ENCODE measurements at regions of chr17 and their contacts with region 1.

Region 1: DNA sequence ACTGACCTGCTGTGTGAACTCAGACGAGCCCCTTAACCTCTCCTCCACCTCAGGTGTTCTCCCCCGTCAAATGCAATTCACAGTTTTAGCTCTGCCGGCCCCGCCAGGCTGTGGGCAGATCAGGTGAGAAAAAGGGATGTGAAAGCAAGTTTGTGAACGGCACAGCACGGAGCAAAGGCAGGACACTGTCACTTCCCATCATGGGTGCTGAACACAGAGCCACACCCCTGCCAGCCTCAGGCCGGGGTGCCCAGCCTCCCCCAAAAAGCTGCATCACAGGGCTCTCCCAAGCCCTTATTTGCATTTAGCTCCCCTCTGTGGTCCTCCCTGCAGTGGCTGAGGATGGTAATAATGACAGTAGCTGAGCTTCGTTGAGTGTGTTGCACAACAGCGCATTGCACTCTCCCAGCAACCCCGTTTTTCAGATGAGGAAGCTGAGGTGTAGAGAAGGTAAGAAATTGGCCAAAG is 88.8 kb upstream of the TNRC6C start:
- DNase-seq: peak; percentile 87
- ATAC-seq: peak; percentile 97
- H3K4me3 ChIP-seq: no peak overlapping the region
- H3K27ac ChIP-seq: no peak overlapping the region
- H3K4me1 ChIP-seq: peaks cover 22% of the 10 kb centered on the region
- H3K27me3 ChIP-seq: peaks cover 0 to 4% of the 10 kb centered on the region in 2 experiments; a peak in 1 of 4 replicates
- CTCF ChIP-seq: peak in 1 of 3 experiments; percentile 13; a peak in 1 of 6 replicates
- EP300 ChIP-seq: peak; percentile 86 to 91; a peak in 3 of 4 replicates
- POLR2A ChIP-seq: no peak
- RAD21 ChIP-seq: no peak

Region 2: GRCh38 chr17:77834170-77835115 is 35.3 kb before region 1 on chr17:
- CTCF ChIA-PET with region 1: interaction called, 7 read pairs
- POLR2A ChIA-PET with region 1: interaction called, 4 read pairs
- RAD21 ChIA-PET with region 1: interaction called, 22 read pairs
- SMC1A ChIA-PET with region 1: interaction called, 18 read pairs
- in situ Hi-C with region 1: no loop called
- intact Hi-C with region 1: no loop called
- DNase-seq: peak; percentile 49
- ATAC-seq: peak; percentile 97
- H3K4me3 ChIP-seq: no peak overlapping the region
- H3K27ac ChIP-seq: no peak overlapping the region
- H3K4me1 ChIP-seq: peaks cover 6% of the 10 kb centered on the region
- H3K27me3 ChIP-seq: no peaks in the 10 kb centered on the region; a peak in 1 of 4 replicates
- CTCF ChIP-seq: no peak
- EP300 ChIP-seq: no peak
- POLR2A ChIP-seq: no peak
- RAD21 ChIP-seq: no peak

Region 3: DNA sequence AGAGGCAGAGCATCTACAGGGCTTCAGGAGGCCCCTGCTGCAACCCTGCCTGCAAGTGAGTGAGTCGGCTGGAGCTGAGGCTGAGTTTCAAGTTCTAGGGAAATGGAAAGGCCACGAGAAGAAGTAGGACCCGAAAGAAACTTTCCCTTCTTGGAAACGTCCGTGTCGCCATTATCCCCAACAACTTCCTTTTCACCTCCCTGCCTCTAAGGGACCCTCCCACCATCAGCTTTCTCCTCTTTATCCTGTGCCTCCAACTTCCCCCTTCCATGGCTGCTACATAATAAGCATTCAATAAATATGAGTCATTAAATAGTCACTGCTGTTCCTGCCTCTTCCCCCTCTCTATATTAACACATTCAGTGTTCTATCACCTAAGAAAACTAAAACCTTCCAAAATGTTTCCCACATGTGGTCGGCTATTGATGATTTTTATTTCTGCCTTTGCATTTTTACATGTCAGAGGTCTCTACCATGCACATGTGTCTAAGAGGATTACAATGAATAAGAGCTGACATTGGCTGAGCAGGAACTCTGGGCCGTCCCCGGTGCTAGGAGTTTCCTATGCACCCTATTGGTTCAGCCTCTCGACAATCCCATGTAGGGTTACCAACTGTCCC is 27.1 kb before region 1 on chr17:
- CTCF ChIA-PET with region 1: no interaction called
- POLR2A ChIA-PET with region 1: interaction called, 4 read pairs
- RAD21 ChIA-PET with region 1: interaction called, 6 read pairs
- SMC1A ChIA-PET with region 1: interaction called, 11 read pairs
- in situ Hi-C with region 1: no loop called
- intact Hi-C with region 1: no loop called
- DNase-seq: no peak
- ATAC-seq: no peak
- H3K4me3 ChIP-seq: no peak overlapping the region
- H3K27ac ChIP-seq: no peak overlapping the region
- H3K4me1 ChIP-seq: peaks cover 14% of the 10 kb centered on the region
- H3K27me3 ChIP-seq: no peaks in the 10 kb centered on the region
- CTCF ChIP-seq: no peak
- EP300 ChIP-seq: no peak
- POLR2A ChIP-seq: no peak
- RAD21 ChIP-seq: no peak

Region 4: GRCh38 chr17:77881545-77881944 is 11.8 kb after region 1 on chr17:
- CTCF ChIA-PET with region 1: interaction called, 21 read pairs
- POLR2A ChIA-PET with region 1: interaction called, 21 read pairs
- RAD21 ChIA-PET with region 1: interaction called, 40 read pairs
- SMC1A ChIA-PET with region 1: interaction called, 39 read pairs
- in situ Hi-C with region 1: no loop called
- intact Hi-C with region 1: loop called (anchors 1 kb)
- DNase-seq: peak; percentile 89
- ATAC-seq: peak; percentile 96
- H3K4me3 ChIP-seq: peak overlapping the region; percentile 4; the same call in 1 of the 2 replicates
- H3K27ac ChIP-seq: no peak overlapping the region; the same call in 1 of the 2 replicates
- H3K4me1 ChIP-seq: peaks cover 21% of the 10 kb centered on the region
- H3K27me3 ChIP-seq: no peaks in the 10 kb centered on the region; a peak in 2 of 4 replicates
- CTCF ChIP-seq: no peak
- EP300 ChIP-seq: peak; percentile 70 to 90; a peak in 3 of 4 replicates
- POLR2A ChIP-seq: no peak
- RAD21 ChIP-seq: peak; percentile 29; the same call in 1 of the 2 replicates